GM12878 (cell line): ENCODE measurements at regions of chrX and their contacts with region 1.

Region 1: DNA sequence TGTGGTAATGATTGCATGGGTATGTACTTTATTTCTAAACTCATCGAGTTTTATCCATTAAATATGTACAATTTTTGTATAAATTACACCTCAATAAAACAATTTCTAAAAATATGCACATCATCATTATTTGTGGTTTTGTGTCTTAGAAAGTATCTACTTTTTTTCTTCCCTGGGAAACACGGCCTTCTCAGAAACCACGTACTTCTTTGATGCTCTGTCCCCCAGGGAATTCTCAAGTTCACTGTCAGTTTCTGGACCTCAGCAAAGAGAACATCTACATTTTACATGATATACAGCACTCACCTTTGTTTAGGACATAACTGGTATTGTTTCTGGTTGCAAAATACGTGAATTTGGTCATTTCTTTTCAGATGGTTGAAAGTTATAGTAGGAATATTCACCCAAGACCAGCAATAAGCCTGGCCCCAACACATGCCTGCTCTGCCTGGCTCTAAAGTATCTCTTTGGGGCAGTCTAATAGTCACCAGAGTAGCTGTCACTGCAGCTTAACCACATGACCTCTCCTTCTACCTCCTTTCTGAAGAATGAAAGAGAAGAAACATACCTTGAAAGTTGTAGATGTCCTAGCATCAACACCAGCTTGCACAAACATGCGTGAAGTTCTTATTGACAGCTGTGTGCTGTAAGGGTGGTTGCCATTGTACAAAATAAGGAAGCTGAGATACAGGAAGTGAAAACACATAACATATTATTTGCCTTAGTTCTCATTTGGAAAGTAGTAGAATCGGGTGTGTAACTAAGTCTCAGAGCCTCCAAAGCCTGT is 48.4 kb upstream of the SPANXN4 start:
- DNase-seq: peak; percentile 78
- ATAC-seq: peak; percentile 87
- H3K4me3 ChIP-seq: peak overlapping the region; percentile 52
- H3K27ac ChIP-seq: peak overlapping the region; percentile 91
- H3K4me1 ChIP-seq: peaks cover 15% of the 10 kb centered on the region
- H3K27me3 ChIP-seq: no peaks in the 10 kb centered on the region
- CTCF ChIP-seq: no peak
- EP300 ChIP-seq: peak; percentile 48 to 78; a peak in 3 of 4 replicates
- POLR2A ChIP-seq: 0 out of 2 replicates have a peak, but pooled peaks have one; percentile 29
- RAD21 ChIP-seq: peak; percentile 15; the same call in 1 of the 2 replicates

Region 2: GRCh38 chrX:142884881-142885280 is 92.4 kb before region 1 on chrX:
- CTCF ChIA-PET with region 1: no interaction called
- POLR2A ChIA-PET with region 1: no interaction called
- RAD21 ChIA-PET with region 1: no interaction called
- SMC1A ChIA-PET with region 1: interaction called, 3 read pairs
- in situ Hi-C with region 1: no loop called
- intact Hi-C with region 1: loop called (anchors 5 kb)
- DNase-seq: no peak
- ATAC-seq: no peak
- H3K4me3 ChIP-seq: no peak overlapping the region
- H3K27ac ChIP-seq: no peak overlapping the region
- H3K4me1 ChIP-seq: no peaks in the 10 kb centered on the region
- H3K27me3 ChIP-seq: no peaks in the 10 kb centered on the region
- CTCF ChIP-seq: no peak
- EP300 ChIP-seq: no peak
- POLR2A ChIP-seq: no peak
- RAD21 ChIP-seq: no peak

Region 3: GRCh38 chrX:143017272-143017671 is 40.0 kb after region 1 on chrX:
- CTCF ChIA-PET with region 1: no interaction called
- POLR2A ChIA-PET with region 1: no interaction called
- RAD21 ChIA-PET with region 1: no interaction called
- SMC1A ChIA-PET with region 1: no interaction called
- in situ Hi-C with region 1: no loop called
- intact Hi-C with region 1: no loop called
- DNase-seq: no peak
- ATAC-seq: peak; percentile 38
- H3K4me3 ChIP-seq: no peak overlapping the region
- H3K27ac ChIP-seq: no peak overlapping the region; the same call in 1 of the 2 replicates
- H3K4me1 ChIP-seq: no peaks in the 10 kb centered on the region
- H3K27me3 ChIP-seq: no peaks in the 10 kb centered on the region
- CTCF ChIP-seq: no peak
- EP300 ChIP-seq: no peak
- POLR2A ChIP-seq: no peak
- RAD21 ChIP-seq: no peak